CD8-positive, alpha-beta T cell (primary cell): ENCODE measurements at regions of chr20 and their contacts with region 1.

Region 1: GRCh38 chr20:50929299-50930138 is 1.7 kb downstream of the ADNP start:
- DNase-seq: peak; percentile 80 to 97 (median 91)
- ATAC-seq: peak; percentile 71
- H3K4me3 ChIP-seq: peak overlapping the region; percentile 64 to 74
- H3K4me3 Mint-ChIP-seq: peak overlapping the region; percentile 88
- H3K27ac ChIP-seq: peak overlapping the region; percentile 48 to 53
- H3K27ac Mint-ChIP-seq: peak overlapping the region; percentile 87
- H3K4me1 ChIP-seq: peaks cover 52% of the 10 kb centered on the region
- H3K4me1 Mint-ChIP-seq: peaks cover 62% of the 10 kb centered on the region
- H3K27me3 ChIP-seq: no peaks in the 10 kb centered on the region
- H3K27me3 Mint-ChIP-seq: no peaks in the 10 kb centered on the region
- CTCF ChIP-seq: peak; percentile 91

Region 2: DNA sequence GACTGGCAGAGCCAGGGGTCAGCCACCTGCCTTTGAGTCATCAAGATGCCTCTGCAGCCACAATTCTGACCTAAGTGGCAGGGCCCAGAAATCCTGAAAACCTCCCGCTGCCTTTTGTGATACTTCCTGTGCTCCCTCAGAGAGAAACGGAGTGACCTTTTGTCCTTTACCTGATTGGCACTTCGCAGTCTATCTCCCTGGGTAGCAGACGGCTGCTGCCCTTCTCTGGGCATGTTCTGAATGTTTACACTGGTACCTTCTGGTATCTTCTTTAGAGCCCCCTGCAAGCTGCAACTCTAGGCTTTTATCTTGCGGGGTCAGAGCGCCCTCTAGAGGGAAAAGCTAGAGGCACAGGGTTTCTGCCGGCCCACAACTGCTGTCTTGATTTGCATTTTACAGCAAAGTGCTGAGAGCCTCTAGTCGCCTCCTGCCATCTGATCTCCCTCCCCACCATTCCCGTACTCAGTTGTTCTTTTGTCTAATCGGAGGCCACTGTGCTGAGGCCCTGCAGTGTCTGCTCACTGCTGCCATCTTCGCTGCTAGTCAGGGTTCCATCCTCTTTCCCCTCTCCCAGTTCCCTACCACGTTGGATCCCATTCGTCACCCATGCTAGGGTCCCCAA is 1041.1 kb before region 1 on chr20:
- CTCF ChIA-PET with region 1: no interaction called
- POLR2A ChIA-PET with region 1: no interaction called
- intact Hi-C with region 1: no loop called
- DNase-seq: peak; percentile 31 to 68 (median 58)
- ATAC-seq: peak; percentile 64
- H3K4me3 ChIP-seq: no peak overlapping the region
- H3K4me3 Mint-ChIP-seq: no peak overlapping the region
- H3K27ac ChIP-seq: no peak overlapping the region
- H3K27ac Mint-ChIP-seq: no peak overlapping the region
- H3K4me1 ChIP-seq: no peaks in the 10 kb centered on the region
- H3K4me1 Mint-ChIP-seq: peaks cover 2% of the 10 kb centered on the region
- H3K27me3 ChIP-seq: no peaks in the 10 kb centered on the region
- H3K27me3 Mint-ChIP-seq: no peaks in the 10 kb centered on the region
- CTCF ChIP-seq: peak; percentile 66

Region 3: GRCh38 chr20:50731055-50731871 is 198.3 kb before region 1 on chr20 and contains the start of gene PARD6B:
- CTCF ChIA-PET with region 1: no interaction called
- POLR2A ChIA-PET with region 1: no interaction called
- intact Hi-C with region 1: loop called (anchors 1 to 2 kb)
- DNase-seq: peak; percentile 98 to 100 (median 99)
- ATAC-seq: peak; percentile 96
- H3K4me3 ChIP-seq: peak within 1 kb of the TSS; percentile 72 to 81
- H3K4me3 Mint-ChIP-seq: peak within 1 kb of the TSS; percentile 91
- H3K27ac ChIP-seq: peak within 1 kb of the TSS; percentile 51 to 54
- H3K27ac Mint-ChIP-seq: peak within 1 kb of the TSS; percentile 86
- H3K4me1 ChIP-seq: peaks cover 16% of the 10 kb centered on the region
- H3K4me1 Mint-ChIP-seq: peaks cover 34% of the 10 kb centered on the region
- H3K27me3 ChIP-seq: no peaks in the 10 kb centered on the region
- H3K27me3 Mint-ChIP-seq: no peaks in the 10 kb centered on the region
- CTCF ChIP-seq: no peak
- total RNA-seq, gene PARD6B: 5.6 to 6.3 TPM

Region 4: DNA sequence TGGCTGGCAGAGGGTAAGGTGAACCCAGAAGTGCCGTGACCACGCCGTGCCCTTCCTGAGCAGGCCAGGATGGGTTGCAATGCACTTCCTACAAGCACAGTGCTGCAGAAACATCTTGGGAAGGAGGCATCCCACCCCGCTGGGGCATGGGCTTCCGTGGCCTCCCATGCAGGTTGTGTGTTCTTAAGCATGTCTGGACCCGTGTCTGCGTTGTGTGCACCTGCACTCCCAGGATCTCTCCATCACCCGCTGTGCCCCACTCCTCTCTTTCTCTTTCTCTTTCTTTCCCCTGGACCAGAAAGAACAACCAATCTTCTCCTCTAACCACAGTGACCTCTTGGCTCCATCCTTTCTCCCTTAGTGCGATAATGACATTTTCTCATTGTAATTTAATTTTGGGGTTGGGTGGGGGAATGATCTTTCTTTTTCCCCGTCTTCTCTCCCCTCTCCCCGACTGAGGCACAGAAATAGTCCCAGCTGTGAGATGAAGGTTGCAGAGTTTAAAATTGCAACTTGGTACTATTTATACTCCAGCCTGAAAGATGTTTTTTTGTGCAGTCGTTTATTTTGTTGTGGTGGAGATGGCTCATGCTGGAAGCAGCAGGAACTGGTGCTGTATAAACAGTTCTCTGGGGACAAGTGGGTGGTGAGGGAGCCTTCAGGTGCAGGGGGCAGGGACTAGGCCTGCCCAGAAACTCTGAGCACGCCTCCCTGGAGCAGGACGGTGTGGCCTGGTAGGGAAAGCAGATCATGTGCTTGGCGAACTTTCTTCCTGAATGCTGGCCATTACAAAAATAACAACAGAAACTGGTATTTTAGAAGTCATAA is 114.1 kb before region 1 on chr20:
- CTCF ChIA-PET with region 1: interaction called, 12 read pairs
- POLR2A ChIA-PET with region 1: interaction called, 16 read pairs
- intact Hi-C with region 1: loop called (anchors 1 kb)
- DNase-seq: peak in 3 of 9 experiments; percentile 14 to 60 (median 40)
- ATAC-seq: peak; percentile 12
- H3K4me3 ChIP-seq: peak overlapping the region; percentile 12 to 25
- H3K4me3 Mint-ChIP-seq: peak overlapping the region; percentile 82
- H3K27ac ChIP-seq: peak overlapping the region in 1 of 2 experiments; percentile 31
- H3K27ac Mint-ChIP-seq: peak overlapping the region; percentile 93
- H3K4me1 ChIP-seq: peaks cover 44% of the 10 kb centered on the region
- H3K4me1 Mint-ChIP-seq: peaks cover 70% of the 10 kb centered on the region
- H3K27me3 ChIP-seq: no peaks in the 10 kb centered on the region
- H3K27me3 Mint-ChIP-seq: no peaks in the 10 kb centered on the region
- CTCF ChIP-seq: no peak

Region 5: DNA sequence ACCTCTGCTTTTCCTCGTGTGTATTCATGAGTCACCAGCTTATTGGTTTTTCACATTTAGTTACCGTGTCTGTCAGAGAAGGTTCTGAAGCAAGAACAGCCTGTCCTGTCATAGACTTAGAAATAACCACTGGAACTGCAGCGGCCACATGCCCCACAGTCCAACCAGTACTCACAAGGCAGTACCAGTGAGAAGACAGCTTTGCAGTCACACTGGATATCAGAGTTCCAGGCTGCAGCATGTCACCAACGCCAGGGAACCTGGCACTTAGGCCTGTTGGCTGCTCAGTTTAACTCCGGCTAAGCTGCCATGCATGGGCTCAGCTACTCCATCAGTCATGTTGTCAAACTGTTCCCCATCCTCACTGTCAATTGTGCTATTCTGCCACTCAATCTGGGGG is 38.4 kb before region 1 on chr20:
- CTCF ChIA-PET with region 1: interaction called, 21 read pairs
- POLR2A ChIA-PET with region 1: interaction called, 4 read pairs
- intact Hi-C with region 1: no loop called
- DNase-seq: no peak
- ATAC-seq: no peak
- H3K4me3 ChIP-seq: no peak overlapping the region
- H3K4me3 Mint-ChIP-seq: no peak overlapping the region
- H3K27ac ChIP-seq: no peak overlapping the region
- H3K27ac Mint-ChIP-seq: peak overlapping the region; percentile 3
- H3K4me1 ChIP-seq: no peaks in the 10 kb centered on the region
- H3K4me1 Mint-ChIP-seq: peaks cover 2% of the 10 kb centered on the region
- H3K27me3 ChIP-seq: no peaks in the 10 kb centered on the region
- H3K27me3 Mint-ChIP-seq: no peaks in the 10 kb centered on the region
- CTCF ChIP-seq: no peak

Region 6: DNA sequence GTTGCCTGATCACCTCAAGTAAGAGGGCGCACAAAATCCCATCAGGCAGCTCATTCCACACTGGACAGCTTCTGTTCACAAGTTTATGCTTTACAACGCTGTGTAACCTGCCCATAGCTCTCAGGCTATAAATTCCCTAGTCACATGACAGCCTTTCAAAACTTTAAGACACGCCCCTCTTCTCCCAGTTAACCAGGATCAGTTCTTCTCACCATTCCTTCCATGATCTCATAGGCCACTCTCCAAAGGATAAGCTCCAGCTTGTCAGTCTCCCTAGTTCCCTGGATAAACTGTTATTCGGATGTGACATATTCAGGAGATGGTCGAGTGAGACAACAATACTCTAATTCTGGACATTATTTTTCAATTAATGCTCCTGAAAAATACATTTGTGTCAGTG is 13.2 kb before region 1 on chr20:
- CTCF ChIA-PET with region 1: interaction called, 19 read pairs
- POLR2A ChIA-PET with region 1: interaction called, 7 read pairs
- intact Hi-C with region 1: no loop called
- DNase-seq: no peak
- ATAC-seq: no peak
- H3K4me3 ChIP-seq: no peak overlapping the region
- H3K4me3 Mint-ChIP-seq: no peak overlapping the region
- H3K27ac ChIP-seq: no peak overlapping the region
- H3K27ac Mint-ChIP-seq: peak overlapping the region; percentile 42
- H3K4me1 ChIP-seq: peaks cover 71% of the 10 kb centered on the region
- H3K4me1 Mint-ChIP-seq: peaks cover 87% of the 10 kb centered on the region
- H3K27me3 ChIP-seq: no peaks in the 10 kb centered on the region
- H3K27me3 Mint-ChIP-seq: no peaks in the 10 kb centered on the region
- CTCF ChIP-seq: no peak

Region 7: GRCh38 chr20:50958615-50959542 is 29.4 kb after region 1 on chr20 and contains the start of gene MOCS3:
- CTCF ChIA-PET with region 1: interaction called, 15 read pairs
- POLR2A ChIA-PET with region 1: interaction called, 83 read pairs
- intact Hi-C with region 1: loop called (anchors 1 kb)
- DNase-seq: peak; percentile 65 to 95 (median 82)
- ATAC-seq: peak; percentile 77
- H3K4me3 ChIP-seq: peak within 1 kb of the TSS; percentile 73 to 87
- H3K4me3 Mint-ChIP-seq: peak within 1 kb of the TSS; percentile 97
- H3K27ac ChIP-seq: peak within 1 kb of the TSS; percentile 89 to 99
- H3K27ac Mint-ChIP-seq: peak within 1 kb of the TSS; percentile 99
- H3K4me1 ChIP-seq: peaks cover 38% of the 10 kb centered on the region
- H3K4me1 Mint-ChIP-seq: peaks cover 64% of the 10 kb centered on the region
- H3K27me3 ChIP-seq: no peaks in the 10 kb centered on the region
- H3K27me3 Mint-ChIP-seq: no peaks in the 10 kb centered on the region
- CTCF ChIP-seq: no peak
- total RNA-seq, gene MOCS3: 3.6 to 4.1 TPM

Region 8: GRCh38 chr20:51667002-51667408 is 737.5 kb after region 1 on chr20:
- CTCF ChIA-PET with region 1: no interaction called
- POLR2A ChIA-PET with region 1: no interaction called
- intact Hi-C with region 1: no loop called
- DNase-seq: peak in 6 of 9 experiments; percentile 10 to 70 (median 34)
- ATAC-seq: peak; percentile 58
- H3K4me3 ChIP-seq: no peak overlapping the region
- H3K4me3 Mint-ChIP-seq: peak overlapping the region; percentile 7
- H3K27ac ChIP-seq: peak overlapping the region in 1 of 2 experiments; percentile 43
- H3K27ac Mint-ChIP-seq: peak overlapping the region; percentile 55
- H3K4me1 ChIP-seq: peaks cover 7% of the 10 kb centered on the region
- H3K4me1 Mint-ChIP-seq: peaks cover 13% of the 10 kb centered on the region
- H3K27me3 ChIP-seq: no peaks in the 10 kb centered on the region
- H3K27me3 Mint-ChIP-seq: no peaks in the 10 kb centered on the region
- CTCF ChIP-seq: no peak

Region 9: DNA sequence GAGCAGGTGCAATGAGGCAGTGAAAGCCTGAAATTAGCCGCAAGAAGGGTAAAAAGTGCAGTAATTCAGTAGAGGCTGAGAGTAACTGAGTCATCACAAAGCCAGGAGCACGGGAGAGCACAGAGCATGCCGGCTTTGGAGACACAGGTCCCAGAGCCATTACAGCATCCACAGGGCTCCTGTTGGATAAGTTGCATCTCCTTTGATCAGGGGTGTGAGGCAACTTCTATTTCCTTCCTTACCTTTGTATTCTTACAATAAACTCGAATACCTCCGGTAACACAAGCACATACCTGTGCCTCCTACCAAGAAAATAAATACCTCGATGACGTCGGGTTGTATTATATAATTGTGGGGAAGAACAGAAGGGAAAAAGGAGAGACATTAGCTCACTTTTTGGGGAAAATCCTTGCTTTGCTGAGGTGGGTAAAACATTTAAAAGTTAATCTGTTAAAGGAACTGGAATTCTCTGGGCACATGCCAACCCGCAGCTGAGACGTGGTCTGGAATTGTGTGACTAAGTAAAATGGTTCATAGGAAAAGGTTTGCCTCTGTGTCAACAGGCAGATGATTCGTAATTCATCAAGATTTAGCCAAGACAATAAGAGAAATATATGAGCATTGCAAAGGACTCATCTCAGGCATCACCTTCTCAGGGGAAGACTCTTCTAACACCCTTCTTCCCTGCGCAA is 1622.8 kb after region 1 on chr20:
- CTCF ChIA-PET with region 1: no interaction called
- POLR2A ChIA-PET with region 1: no interaction called
- intact Hi-C with region 1: no loop called
- DNase-seq: no peak
- ATAC-seq: no peak
- H3K4me3 ChIP-seq: no peak overlapping the region
- H3K4me3 Mint-ChIP-seq: no peak overlapping the region
- H3K27ac ChIP-seq: no peak overlapping the region
- H3K27ac Mint-ChIP-seq: no peak overlapping the region
- H3K4me1 ChIP-seq: no peaks in the 10 kb centered on the region
- H3K4me1 Mint-ChIP-seq: no peaks in the 10 kb centered on the region
- H3K27me3 ChIP-seq: no peaks in the 10 kb centered on the region
- H3K27me3 Mint-ChIP-seq: no peaks in the 10 kb centered on the region
- CTCF ChIP-seq: no peak